Aorta (tissue), 5 donors: ENCODE measurements at regions of chr6 and their contacts with region 1.

Region 1: DNA sequence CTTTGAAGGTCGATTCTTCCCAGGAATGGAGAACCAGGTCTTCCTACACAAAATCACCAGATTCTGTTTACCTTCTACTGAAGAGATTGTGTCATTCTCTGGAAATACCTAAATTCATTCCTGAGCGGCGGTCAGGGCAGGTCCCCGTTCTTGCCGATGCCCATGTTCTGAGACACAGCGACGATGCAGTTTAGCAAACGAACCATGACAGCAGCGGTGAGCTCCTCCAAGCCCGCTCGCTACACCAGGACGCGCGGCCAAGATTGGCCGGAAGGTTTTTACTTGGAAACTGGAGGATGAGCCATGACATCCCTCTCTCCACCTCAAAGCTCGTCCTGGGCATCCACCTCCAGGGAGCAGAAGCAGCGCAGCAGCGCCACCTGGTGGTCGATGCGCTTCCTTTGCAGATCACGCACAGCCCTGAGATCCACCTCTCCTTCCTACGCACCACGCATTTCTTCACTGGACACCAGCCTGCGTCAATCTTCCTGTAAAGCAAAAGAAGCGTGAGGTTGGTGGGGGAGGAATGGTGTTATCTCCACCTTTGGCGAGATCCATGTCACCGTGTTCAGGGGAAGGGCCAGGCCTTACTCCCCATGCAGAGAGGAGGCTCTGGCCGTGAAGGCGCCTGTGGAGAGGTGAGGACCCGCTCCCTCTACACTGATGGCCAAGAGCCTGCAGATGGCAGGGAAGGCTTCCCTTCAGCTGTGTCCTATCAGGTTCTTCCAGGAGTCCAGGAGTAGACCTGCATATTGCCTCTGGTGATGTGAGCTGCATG is 9.9 kb upstream of the HLA-B start:
- DNase-seq: peak; percentile 89 to 97
- ATAC-seq: peak; percentile 96
- H3K4me3 ChIP-seq: no peak overlapping the region
- H3K27ac ChIP-seq: no peak overlapping the region
- H3K4me1 ChIP-seq: no peaks in the 10 kb centered on the region
- H3K27me3 ChIP-seq: no peaks in the 10 kb centered on the region

Region 2: DNA sequence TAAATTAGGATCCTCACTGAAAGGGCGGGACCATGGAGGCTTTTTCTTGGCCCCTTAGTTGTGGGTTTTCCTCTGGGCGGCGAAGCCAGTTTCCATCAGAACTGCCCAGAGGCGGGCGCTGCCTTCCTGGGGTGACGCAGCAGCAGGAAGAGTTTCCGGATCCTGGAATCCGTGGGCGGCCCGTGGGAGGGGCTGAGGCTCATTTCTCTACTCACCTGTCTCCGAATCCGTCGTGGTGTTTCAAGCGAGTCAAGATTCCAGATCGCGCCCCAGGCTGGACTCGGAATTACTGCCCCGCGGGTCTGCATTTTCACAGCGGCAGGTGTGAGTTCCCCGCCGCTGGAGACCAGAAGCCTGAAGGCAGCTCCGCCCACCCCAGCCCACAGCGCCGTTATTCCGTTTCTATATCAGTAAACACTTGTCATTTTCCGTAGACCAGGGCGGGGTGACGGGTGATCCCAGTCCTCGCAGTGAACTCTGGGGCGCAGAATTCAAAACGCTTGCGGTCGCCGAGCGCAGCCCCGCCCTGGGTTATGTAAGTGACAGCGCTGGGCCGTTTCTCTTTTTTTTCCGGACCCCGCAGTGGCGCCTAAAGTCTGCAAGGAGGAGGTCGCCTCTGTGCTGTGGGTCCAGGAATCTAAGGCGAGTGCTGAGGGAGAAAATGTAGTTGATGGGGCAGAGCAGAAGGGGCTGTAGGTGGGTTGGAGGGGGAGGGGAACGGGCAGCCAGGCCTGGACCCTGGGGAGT is 169.2 kb before region 1 on chr6:
- intact Hi-C with region 1: loop called (anchors 1 to 2 kb)
- DNase-seq: peak; percentile 96
- ATAC-seq: peak; percentile 94
- H3K4me3 ChIP-seq: peak overlapping the region; percentile 57 to 77
- H3K27ac ChIP-seq: peak overlapping the region; percentile 59 to 78
- H3K4me1 ChIP-seq: no peaks in the 10 kb centered on the region
- H3K27me3 ChIP-seq: no peaks in the 10 kb centered on the region